HepG2 (cell line): ENCODE measurements at regions of chr9 and their contacts with region 1.

Region 1: DNA sequence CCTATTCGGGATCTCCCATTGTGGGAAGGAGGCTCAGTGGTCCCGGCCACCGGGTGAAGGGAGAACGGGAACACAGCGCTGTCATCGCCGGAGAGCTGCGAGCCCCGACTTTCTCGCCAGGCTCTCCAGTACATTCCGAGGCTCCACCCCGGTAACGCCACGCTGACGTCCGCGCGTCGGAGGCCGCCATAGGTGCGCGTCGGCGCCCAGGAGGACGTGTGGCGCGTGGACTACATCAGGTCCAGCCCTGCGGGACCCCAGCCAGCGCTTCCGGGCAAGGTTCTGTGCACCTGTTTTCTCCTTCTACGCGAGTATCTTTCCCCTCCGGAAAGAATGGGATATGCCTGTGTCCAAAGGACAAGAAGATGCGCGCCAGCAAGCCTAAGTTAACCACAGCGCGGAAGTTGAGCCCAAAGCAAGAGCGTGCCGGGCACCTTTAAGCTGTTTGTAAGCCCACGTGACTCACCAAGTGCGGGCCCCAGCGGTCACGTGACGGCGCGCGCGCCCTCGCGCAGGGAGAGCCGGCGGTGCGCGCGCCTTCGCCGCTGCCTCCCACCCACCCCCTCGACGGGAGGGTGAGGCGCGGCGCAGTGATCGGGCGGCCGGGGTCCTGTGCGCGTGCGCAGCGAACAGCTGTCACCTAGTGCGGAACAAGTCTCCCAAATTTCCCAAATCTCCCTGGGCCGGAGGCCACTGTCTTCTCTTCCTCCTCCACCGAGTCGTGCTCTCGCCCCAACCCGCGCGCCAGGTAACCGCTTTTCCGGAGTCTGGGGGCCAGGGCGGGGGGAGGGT is at the start of gene KDM4C:
- DNase-seq: peak; percentile 90
- ATAC-seq: peak; percentile 90
- H3K4me3 ChIP-seq: peak within 1 kb of the TSS; percentile 87 to 95 (median 88)
- H3K27ac ChIP-seq: peak within 1 kb of the TSS; percentile 96
- H3K4me1 ChIP-seq: peaks cover 32% of the 10 kb centered on the region
- H3K27me3 ChIP-seq: no peaks in the 10 kb centered on the region; a peak in 1 of 5 replicates
- CTCF ChIP-seq: no peak
- EP300 ChIP-seq: peak; percentile 3 to 5; a peak in 1 of 4 replicates
- POLR2A ChIP-seq: peak; percentile 96 to 98
- RAD21 ChIP-seq: peak; percentile 28
- total RNA-seq, gene KDM4C: 22.1 and 23.6 TPM in 2 replicates

Region 2: GRCh38 chr9:6467006-6467625 is 290.5 kb before region 1 on chr9:
- CTCF ChIA-PET with region 1: no interaction called
- POLR2A ChIA-PET with region 1: no interaction called
- in situ Hi-C with region 1: no loop called
- intact Hi-C with region 1: no loop called
- DNase-seq: no peak
- ATAC-seq: no peak
- H3K4me3 ChIP-seq: no peak overlapping the region
- H3K27ac ChIP-seq: no peak overlapping the region
- H3K4me1 ChIP-seq: no peaks in the 10 kb centered on the region
- H3K27me3 ChIP-seq: no peaks in the 10 kb centered on the region
- CTCF ChIP-seq: no peak
- EP300 ChIP-seq: no peak
- POLR2A ChIP-seq: no peak
- RAD21 ChIP-seq: no peak

Region 3: GRCh38 chr9:6590334-6590733 is 167.3 kb before region 1 on chr9:
- CTCF ChIA-PET with region 1: no interaction called
- POLR2A ChIA-PET with region 1: interaction called, 12 read pairs
- in situ Hi-C with region 1: no loop called
- intact Hi-C with region 1: no loop called
- DNase-seq: no peak
- ATAC-seq: no peak; the same call in 2 of the 3 replicates
- H3K4me3 ChIP-seq: no peak overlapping the region; a peak in 1 of 6 replicates
- H3K27ac ChIP-seq: peak overlapping the region; percentile 83
- H3K4me1 ChIP-seq: peaks cover 41% of the 10 kb centered on the region
- H3K27me3 ChIP-seq: no peaks in the 10 kb centered on the region
- CTCF ChIP-seq: no peak
- EP300 ChIP-seq: no peak
- POLR2A ChIP-seq: no peak
- RAD21 ChIP-seq: no peak

Region 4: GRCh38 chr9:6632516-6633183 is 125.0 kb before region 1 on chr9:
- CTCF ChIA-PET with region 1: no interaction called
- POLR2A ChIA-PET with region 1: no interaction called
- in situ Hi-C with region 1: no loop called
- intact Hi-C with region 1: no loop called
- DNase-seq: peak; percentile 74
- ATAC-seq: peak; percentile 97
- H3K4me3 ChIP-seq: peak overlapping the region in 1 of 3 experiments; percentile 35; a peak in 3 of 6 replicates
- H3K27ac ChIP-seq: peak overlapping the region; percentile 49
- H3K4me1 ChIP-seq: peaks cover 67% of the 10 kb centered on the region
- H3K27me3 ChIP-seq: no peaks in the 10 kb centered on the region
- CTCF ChIP-seq: 0 out of 2 replicates have a peak, but pooled peaks have one; percentile 7
- EP300 ChIP-seq: peak in 1 of 2 experiments; percentile 14; a peak in 1 of 4 replicates
- POLR2A ChIP-seq: peak in 1 of 2 experiments; percentile 31; a peak in 1 of 4 replicates
- RAD21 ChIP-seq: 0 out of 2 replicates have a peak, but pooled peaks have one; percentile 14

Region 5: GRCh38 chr9:6667633-6668280 is 89.9 kb before region 1 on chr9:
- CTCF ChIA-PET with region 1: no interaction called
- POLR2A ChIA-PET with region 1: interaction called, 11 read pairs
- in situ Hi-C with region 1: no loop called
- intact Hi-C with region 1: no loop called
- DNase-seq: no peak
- ATAC-seq: no peak
- H3K4me3 ChIP-seq: no peak overlapping the region
- H3K27ac ChIP-seq: no peak overlapping the region
- H3K4me1 ChIP-seq: peaks cover 70% of the 10 kb centered on the region
- H3K27me3 ChIP-seq: no peaks in the 10 kb centered on the region
- CTCF ChIP-seq: peak; percentile 69
- EP300 ChIP-seq: no peak
- POLR2A ChIP-seq: no peak
- RAD21 ChIP-seq: peak; percentile 47; the same call in 1 of the 2 replicates

Region 6: DNA sequence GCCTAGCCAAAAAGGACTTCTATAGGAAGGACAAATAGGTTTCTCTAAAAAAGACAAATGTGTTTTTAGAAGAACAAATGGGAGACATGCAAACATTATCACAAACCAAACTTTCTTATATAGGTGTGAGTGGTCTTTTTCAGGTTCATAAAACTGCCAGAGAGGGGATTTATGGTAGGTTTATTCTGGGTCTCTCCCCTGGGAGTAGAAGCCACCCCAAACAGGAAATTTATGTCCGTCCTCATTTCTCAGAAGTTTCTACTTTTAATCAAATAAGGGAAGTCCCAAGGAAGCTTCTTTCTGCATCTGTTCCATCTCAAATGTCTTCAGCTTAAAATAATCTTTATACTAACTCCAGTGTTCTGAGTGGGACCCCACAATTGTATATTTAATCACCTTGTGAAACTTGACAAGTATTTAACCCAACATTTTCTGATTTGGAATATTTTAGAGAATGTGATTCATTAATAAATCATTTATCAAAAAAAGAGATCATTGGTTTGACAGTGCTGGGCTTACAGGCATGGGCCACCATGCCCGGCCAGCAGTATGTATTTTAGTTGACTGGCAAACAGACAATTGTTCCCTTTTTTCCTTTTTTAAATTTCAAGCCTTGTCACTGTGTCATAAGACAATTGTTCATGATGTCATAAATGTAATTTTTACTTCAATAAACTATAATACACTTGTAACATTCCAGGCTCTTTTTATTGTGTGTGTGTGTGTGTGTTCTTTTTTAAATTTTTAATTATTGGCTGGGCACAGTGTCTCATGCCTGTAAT is 67.6 kb before region 1 on chr9:
- CTCF ChIA-PET with region 1: no interaction called
- POLR2A ChIA-PET with region 1: no interaction called
- in situ Hi-C with region 1: no loop called
- intact Hi-C with region 1: no loop called
- DNase-seq: no peak
- ATAC-seq: no peak
- H3K4me3 ChIP-seq: no peak overlapping the region
- H3K27ac ChIP-seq: no peak overlapping the region
- H3K4me1 ChIP-seq: 0 out of 2 replicates have a peak, but pooled peaks cover 4% of the 10 kb centered on the region
- H3K27me3 ChIP-seq: no peaks in the 10 kb centered on the region
- CTCF ChIP-seq: no peak
- EP300 ChIP-seq: no peak
- POLR2A ChIP-seq: no peak
- RAD21 ChIP-seq: no peak

Region 7: DNA sequence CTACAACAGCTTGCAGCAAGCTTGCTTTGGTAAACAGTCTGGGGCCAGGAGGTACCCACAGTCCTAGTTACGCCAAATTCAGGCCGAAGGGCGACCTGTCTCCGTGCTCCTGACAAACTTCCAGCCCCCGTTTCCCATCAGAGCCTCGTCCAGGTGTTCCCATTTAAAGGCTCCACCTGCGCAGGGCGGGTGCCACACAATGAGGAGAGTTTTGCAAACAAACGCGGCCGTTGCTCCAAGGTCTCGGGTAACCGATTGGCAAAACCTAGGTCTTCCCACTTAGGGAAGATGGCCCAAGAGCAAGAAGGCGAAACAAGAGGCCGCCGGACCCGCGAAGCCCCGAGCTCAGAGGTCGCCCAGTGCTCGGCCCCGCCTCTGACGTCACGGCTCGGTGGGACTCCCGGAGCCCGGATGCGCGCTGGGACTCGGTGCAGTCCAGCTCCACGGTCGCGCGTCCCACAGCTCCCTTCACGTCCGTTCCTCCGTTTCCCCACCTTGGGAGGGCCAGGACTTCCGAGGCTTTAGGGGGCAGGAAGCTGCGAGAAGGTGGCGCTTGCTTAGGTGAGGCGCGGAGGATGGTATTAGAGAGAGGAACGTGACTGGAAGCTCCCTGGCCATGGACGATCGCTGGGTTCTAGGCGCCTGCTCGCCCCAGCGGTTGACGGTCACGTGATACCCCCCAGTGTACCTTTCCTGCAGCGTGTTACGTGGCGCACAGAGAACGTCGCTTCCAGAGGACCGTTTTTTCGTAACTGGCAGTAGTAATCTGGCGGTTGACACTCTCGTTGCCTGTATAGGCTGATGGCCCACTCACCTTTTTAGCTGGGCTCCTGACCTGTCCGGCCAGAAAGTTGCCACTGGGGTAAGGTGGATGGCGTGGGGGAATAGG is 41.7 kb before region 1 on chr9:
- CTCF ChIA-PET with region 1: no interaction called
- POLR2A ChIA-PET with region 1: interaction called, 59 read pairs
- in situ Hi-C with region 1: no loop called
- intact Hi-C with region 1: no loop called
- DNase-seq: peak; percentile 79
- ATAC-seq: peak; percentile 89
- H3K4me3 ChIP-seq: peak overlapping the region; percentile 57 to 72 (median 65)
- H3K27ac ChIP-seq: peak overlapping the region; percentile 93
- H3K4me1 ChIP-seq: peaks cover 34% of the 10 kb centered on the region
- H3K27me3 ChIP-seq: no peaks in the 10 kb centered on the region
- CTCF ChIP-seq: 0 out of 2 replicates have a peak, but pooled peaks have one; percentile 16
- EP300 ChIP-seq: no peak
- POLR2A ChIP-seq: peak; percentile 85 to 93
- RAD21 ChIP-seq: no peak

Region 8: GRCh38 chr9:6779417-6780241 is 22.0 kb after region 1 on chr9:
- CTCF ChIA-PET with region 1: no interaction called
- POLR2A ChIA-PET with region 1: interaction called, 130 read pairs
- in situ Hi-C with region 1: no loop called
- intact Hi-C with region 1: loop called (anchors 2 kb)
- DNase-seq: peak; percentile 81
- ATAC-seq: peak; percentile 77
- H3K4me3 ChIP-seq: peak overlapping the region in 1 of 3 experiments; percentile 9; a peak in 1 of 6 replicates
- H3K27ac ChIP-seq: peak overlapping the region; percentile 83
- H3K4me1 ChIP-seq: peaks cover 81% of the 10 kb centered on the region
- H3K27me3 ChIP-seq: no peaks in the 10 kb centered on the region
- CTCF ChIP-seq: no peak
- EP300 ChIP-seq: peak in 1 of 2 experiments; percentile 41; a peak in 1 of 4 replicates
- POLR2A ChIP-seq: 0 out of 4 replicates have a peak, but pooled peaks of 1 of the 2 experiments have one; percentile 18
- RAD21 ChIP-seq: no peak

Region 9: GRCh38 chr9:6788162-6789016 is 30.7 kb after region 1 on chr9:
- CTCF ChIA-PET with region 1: no interaction called
- POLR2A ChIA-PET with region 1: interaction called, 130 read pairs
- in situ Hi-C with region 1: no loop called
- intact Hi-C with region 1: loop called (anchors 1 kb)
- DNase-seq: peak; percentile 94
- ATAC-seq: peak; percentile 94
- H3K4me3 ChIP-seq: peak overlapping the region; percentile 48 to 76 (median 55)
- H3K27ac ChIP-seq: peak overlapping the region; percentile 93
- H3K4me1 ChIP-seq: peaks cover 92% of the 10 kb centered on the region
- H3K27me3 ChIP-seq: no peaks in the 10 kb centered on the region; a peak in 1 of 5 replicates
- CTCF ChIP-seq: no peak
- EP300 ChIP-seq: peak in 1 of 2 experiments; percentile 80; a peak in 2 of 4 replicates
- POLR2A ChIP-seq: peak in 1 of 2 experiments; percentile 47; a peak in 1 of 4 replicates
- RAD21 ChIP-seq: no peak

Region 10: GRCh38 chr9:6818320-6818922 is 60.8 kb after region 1 on chr9:
- CTCF ChIA-PET with region 1: no interaction called
- POLR2A ChIA-PET with region 1: interaction called, 5 read pairs
- in situ Hi-C with region 1: no loop called
- intact Hi-C with region 1: loop called (anchors 5 kb)
- DNase-seq: no peak
- ATAC-seq: no peak
- H3K4me3 ChIP-seq: no peak overlapping the region
- H3K27ac ChIP-seq: no peak overlapping the region
- H3K4me1 ChIP-seq: peaks cover 22% of the 10 kb centered on the region
- H3K27me3 ChIP-seq: no peaks in the 10 kb centered on the region
- CTCF ChIP-seq: no peak
- EP300 ChIP-seq: no peak
- POLR2A ChIP-seq: no peak
- RAD21 ChIP-seq: no peak

Region 11: DNA sequence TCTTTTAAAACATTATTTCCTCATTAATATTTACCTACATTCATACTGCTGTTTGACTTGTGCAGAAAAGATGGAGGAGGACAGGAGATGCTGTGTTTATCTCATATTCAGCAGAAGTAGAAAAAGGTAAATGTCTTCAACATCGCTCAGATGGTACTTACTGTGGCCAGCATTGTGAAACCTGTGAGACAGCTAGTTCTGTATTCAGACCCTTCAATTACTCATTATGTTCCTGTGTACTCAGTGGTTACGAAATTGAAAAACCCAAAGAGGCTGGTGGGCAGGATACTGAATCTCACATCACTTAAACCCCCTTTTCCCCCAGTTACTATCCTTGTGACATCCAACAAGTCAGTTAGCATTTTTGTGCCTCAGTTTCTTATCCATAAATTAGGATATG is 216.1 kb after region 1 on chr9:
- CTCF ChIA-PET with region 1: no interaction called
- POLR2A ChIA-PET with region 1: no interaction called
- in situ Hi-C with region 1: no loop called
- intact Hi-C with region 1: no loop called
- DNase-seq: peak; percentile 58
- ATAC-seq: peak; percentile 71
- H3K4me3 ChIP-seq: no peak overlapping the region
- H3K27ac ChIP-seq: no peak overlapping the region
- H3K4me1 ChIP-seq: peaks cover 47% of the 10 kb centered on the region
- H3K27me3 ChIP-seq: no peaks in the 10 kb centered on the region
- CTCF ChIP-seq: no peak
- EP300 ChIP-seq: no peak
- POLR2A ChIP-seq: no peak
- RAD21 ChIP-seq: no peak